Activated T-helper 2 cell treated with anti-CD3 and anti-CD28 coated beads, Interferon-gamma antibody, Interleukin-2, Interleukin-4, amounts not matched to agents 10 μg/mL and 5 μg/mL and 100 μg/mL, durations not matched to agents 14 hours and 24 hours and 36 hours (primary cell): ENCODE measurements at regions of chr12 and their contacts with region 1.

Region 1: DNA sequence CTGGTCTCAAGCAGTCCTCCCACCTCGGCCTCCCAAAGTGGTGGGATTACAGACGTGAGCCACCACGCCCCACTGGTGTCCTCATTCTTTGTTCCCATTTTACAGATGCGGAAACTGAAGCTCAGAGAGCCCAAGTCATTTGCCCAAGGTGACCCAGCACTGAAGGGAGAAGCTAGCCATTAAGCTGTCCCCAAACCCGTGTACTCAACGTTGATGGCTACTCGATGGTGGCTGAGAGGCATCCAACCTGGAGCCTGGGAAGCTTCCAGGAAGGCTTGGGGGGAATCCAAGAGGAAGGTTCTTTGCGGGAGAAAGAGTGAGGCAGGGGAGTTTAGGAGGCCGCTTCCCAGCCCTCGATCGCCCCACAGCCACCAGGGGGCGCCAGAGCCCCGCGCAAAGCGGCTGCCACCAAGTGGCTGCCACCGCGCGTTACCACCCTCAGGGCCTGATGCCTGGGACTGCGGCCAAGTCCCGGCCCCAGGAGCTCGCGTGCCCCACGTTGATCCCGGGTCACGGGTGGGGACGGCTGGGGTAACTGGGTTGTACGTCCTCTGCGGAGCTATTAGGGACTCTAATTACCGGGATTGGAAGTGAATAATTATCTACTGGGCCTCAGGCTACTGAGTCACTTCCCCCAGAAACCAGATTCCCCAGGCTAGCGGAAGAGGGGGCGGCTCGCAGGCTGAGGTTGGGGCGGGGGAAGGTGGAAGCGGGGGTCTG is 8.8 kb upstream of the SH2B3 start:
- DNase-seq: peak; percentile 78
- H3K4me3 Mint-ChIP-seq: peak overlapping the region; percentile 67
- H3K27ac Mint-ChIP-seq: peak overlapping the region; percentile 17
- H3K4me1 Mint-ChIP-seq: peaks cover 27% of the 10 kb centered on the region
- H3K27me3 Mint-ChIP-seq: peaks cover 6% of the 10 kb centered on the region

Region 2: DNA sequence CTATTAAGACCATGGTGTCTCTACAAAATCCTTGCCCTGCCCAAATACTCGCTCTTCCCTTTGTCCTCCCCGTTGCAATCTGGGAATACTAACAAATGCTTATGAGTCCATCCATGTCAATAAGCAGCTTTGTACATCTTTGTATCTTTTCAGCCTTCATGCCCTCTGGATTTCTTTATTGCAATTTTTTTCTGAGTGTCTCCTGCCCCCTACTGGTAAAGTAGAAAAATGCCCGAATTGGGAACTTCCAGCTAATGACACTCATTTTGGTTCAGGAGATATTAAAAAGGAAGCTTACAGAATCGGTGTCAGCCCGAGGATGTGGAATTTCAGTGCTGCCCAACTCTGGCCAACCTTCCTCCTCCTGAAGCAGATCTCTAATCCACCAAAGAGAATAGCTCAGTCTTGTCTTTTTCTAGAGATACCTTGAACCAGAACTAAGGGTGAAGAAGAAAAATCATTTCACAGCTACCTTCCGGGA is 54.8 kb after region 1 on chr12:
- intact Hi-C with region 1: loop called (anchors 1 kb)
- DNase-seq: no peak
- H3K4me3 Mint-ChIP-seq: no peak overlapping the region
- H3K27ac Mint-ChIP-seq: no peak overlapping the region
- H3K4me1 Mint-ChIP-seq: peaks cover 40% of the 10 kb centered on the region
- H3K27me3 Mint-ChIP-seq: no peaks in the 10 kb centered on the region

Region 3: DNA sequence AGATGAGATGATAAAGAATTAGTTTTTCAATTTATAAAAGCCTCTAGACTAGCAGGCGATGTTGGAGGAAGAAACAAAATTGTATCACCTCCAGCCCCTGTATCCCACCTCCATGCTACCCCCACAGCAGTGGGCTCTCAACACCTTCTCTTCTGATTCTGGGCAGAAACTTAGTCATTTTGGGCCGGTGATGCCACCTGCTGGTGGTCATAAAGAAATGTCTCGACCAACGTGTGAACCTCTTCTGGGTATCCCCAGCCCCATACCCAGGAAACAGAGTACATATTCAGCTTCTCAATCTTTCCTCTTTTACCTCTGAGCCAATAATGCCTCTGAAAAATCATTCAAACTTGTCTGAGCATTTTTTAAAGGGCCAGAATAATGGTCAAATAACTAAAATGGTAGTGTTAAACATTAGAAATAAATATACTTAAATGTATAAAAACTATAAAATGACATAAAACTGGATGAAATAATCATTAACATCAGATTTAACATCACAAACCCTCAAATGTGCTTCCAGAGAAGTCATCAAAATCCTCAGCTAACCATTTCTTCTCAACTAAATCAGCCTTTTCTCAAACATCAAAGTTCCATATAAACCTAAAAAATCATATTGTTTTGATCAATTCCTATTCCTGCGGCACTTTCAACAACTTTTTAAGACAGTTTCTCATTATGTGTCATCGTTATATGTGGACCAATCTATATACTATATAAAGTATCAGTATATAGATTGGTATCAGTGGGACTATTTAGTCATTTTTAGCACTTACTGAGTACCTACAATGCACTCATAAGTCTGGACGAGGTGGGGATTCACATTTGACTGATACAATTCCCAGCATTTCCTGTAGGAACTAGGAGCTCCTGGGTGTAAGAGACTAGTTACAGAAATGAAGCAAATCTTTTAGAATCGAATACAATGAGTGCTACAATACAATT is 132.8 kb after region 1 on chr12:
- intact Hi-C with region 1: loop called (anchors 1 kb)
- DNase-seq: peak; percentile 49
- H3K4me3 Mint-ChIP-seq: no peak overlapping the region
- H3K27ac Mint-ChIP-seq: peak overlapping the region; percentile 63
- H3K4me1 Mint-ChIP-seq: peaks cover 12% of the 10 kb centered on the region
- H3K27me3 Mint-ChIP-seq: no peaks in the 10 kb centered on the region